GM10248 (cell line): ENCODE measurements at regions of chr3 and their contacts with region 1.

Region 1: DNA sequence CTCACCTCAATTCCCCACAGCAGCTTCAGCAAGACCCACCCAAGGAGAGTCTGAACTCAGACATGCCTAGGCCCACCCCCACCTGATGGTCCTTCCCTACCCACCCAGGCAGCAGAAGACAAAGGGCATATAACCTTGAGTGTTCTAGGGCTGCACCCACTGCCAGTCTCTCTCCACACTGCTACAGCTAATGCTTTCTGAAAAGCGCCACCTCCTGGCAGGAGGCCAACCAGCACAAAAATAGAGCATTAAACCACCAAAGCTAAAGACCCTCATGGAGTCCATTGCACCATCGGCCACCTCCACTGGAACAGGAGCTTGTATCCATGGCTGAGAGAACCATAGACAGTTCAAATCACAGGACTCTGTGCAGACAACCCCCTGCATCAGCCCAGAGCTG is 11.3 kb upstream of the RPL39L start:
- DNase-seq: no peak
- CTCF ChIP-seq: peak; percentile 54

Region 2: GRCh38 chr3:186849374-186849975 is 301.1 kb before region 1 on chr3:
- CTCF ChIA-PET with region 1: interaction called, 36 read pairs
- POLR2A ChIA-PET with region 1: no interaction called
- DNase-seq: peak; percentile 69
- CTCF ChIP-seq: peak; percentile 61

Region 3: GRCh38 chr3:187101184-187102072 is 49.2 kb before region 1 on chr3:
- CTCF ChIA-PET with region 1: interaction called, 11 read pairs
- POLR2A ChIA-PET with region 1: no interaction called
- DNase-seq: no peak
- CTCF ChIP-seq: no peak

Region 4: GRCh38 chr3:187112934-187113793 is 37.4 kb before region 1 on chr3:
- CTCF ChIA-PET with region 1: interaction called, 64 read pairs
- POLR2A ChIA-PET with region 1: no interaction called
- DNase-seq: peak; percentile 24
- CTCF ChIP-seq: peak; percentile 57

Region 5: DNA sequence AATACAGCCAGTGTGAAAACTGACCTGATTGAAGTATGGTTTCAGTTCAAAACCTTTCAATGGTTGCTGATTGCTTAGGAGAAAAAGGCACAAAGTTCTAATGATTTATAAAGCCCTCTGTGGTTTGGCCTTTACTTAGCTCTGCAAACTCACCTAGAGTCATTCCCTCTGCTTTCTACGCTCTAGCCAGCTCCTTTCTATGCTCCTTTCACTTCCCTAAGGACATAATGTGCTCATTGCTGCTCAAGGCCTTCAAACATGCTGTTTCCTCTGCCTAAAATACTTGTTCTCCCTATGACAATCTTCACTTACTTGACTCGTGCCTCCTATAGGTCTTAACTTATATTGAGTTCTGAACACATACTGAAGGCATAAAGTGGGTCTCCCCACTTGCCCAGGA is 30.3 kb before region 1 on chr3:
- CTCF ChIA-PET with region 1: interaction called, 64 read pairs
- POLR2A ChIA-PET with region 1: no interaction called
- DNase-seq: no peak
- CTCF ChIP-seq: no peak

Region 6: DNA sequence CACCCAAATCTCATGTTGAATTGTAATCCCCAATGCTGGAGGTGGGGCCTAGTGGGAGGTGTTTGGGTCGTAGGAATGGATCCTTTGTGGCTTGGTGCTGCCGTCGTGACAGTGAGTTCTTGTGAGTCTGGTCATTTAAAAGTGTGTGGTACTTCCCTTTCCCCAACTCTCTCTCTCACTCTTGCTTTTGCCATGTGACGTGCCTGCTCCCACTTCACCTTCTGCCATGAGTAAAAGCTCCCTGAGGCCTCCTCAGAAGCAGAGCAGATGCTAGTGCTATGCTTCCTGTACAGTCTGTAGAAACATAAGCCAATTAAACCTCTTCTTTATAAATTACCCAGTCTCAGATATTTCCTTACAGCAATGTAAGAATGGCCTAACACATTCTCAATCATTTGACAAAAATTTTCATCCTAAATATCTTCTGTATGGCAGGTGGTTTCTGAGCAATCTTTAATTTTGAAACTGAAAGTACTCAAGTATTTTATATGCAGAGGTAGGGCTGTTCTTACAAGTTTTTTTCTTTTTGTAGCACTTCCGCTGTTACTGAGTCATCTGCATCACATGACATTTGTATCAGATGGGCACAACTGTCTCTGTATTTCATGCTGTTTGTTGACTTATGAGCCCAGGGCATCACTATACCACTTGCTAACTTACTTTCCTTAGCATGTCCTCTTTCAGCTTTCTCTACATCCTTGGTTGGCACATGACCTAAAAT is 20.1 kb before region 1 on chr3:
- CTCF ChIA-PET with region 1: interaction called, 18 read pairs
- POLR2A ChIA-PET with region 1: no interaction called
- DNase-seq: peak; percentile 40
- CTCF ChIP-seq: no peak

Region 7: DNA sequence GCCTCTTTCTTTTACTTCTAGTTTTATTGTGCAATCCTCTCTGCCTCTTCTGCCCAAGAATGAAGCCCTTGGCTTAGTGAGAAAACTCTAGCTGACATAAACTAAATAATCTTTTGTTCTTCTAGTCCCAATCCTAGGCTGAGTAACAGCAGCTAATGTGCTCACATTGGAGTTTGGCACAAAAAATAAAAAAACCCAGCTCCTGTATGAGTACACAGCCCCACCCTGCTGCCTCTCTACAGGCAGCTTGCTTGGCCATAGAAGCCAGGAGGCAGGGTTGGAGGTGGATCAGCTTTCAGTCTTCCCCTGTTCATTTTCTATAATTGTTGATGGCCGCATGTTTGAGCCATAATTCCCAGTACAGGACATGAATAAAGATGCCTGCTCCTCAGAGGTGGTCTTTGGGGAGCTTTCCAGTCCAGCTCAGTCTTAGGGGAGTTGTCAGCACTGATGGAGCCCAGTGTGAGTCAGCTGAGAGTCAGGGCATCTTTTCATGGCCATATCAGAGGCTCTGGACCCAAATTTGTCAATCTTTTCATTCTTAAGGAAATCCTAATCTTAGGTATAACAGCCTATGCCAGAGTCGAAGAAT is 93.4 kb after region 1 on chr3:
- CTCF ChIA-PET with region 1: no interaction called
- POLR2A ChIA-PET with region 1: no interaction called
- DNase-seq: no peak
- CTCF ChIP-seq: no peak